CD8-positive, alpha-beta T cell (primary cell): ENCODE measurements at regions of chr5 and their contacts with region 1.

Region 1: GRCh38 chr5:170225326-170226128 is 7.3 kb upstream of the C5orf58 start:
- DNase-seq: peak; percentile 47 to 86 (median 79)
- ATAC-seq: peak; percentile 69
- H3K4me3 ChIP-seq: no peak overlapping the region
- H3K4me3 Mint-ChIP-seq: no peak overlapping the region
- H3K27ac ChIP-seq: no peak overlapping the region
- H3K27ac Mint-ChIP-seq: no peak overlapping the region
- H3K4me1 ChIP-seq: peaks cover 6% of the 10 kb centered on the region
- H3K4me1 Mint-ChIP-seq: peaks cover 4% of the 10 kb centered on the region
- H3K27me3 ChIP-seq: no peaks in the 10 kb centered on the region
- H3K27me3 Mint-ChIP-seq: no peaks in the 10 kb centered on the region
- CTCF ChIP-seq: peak; percentile 88

Region 2: DNA sequence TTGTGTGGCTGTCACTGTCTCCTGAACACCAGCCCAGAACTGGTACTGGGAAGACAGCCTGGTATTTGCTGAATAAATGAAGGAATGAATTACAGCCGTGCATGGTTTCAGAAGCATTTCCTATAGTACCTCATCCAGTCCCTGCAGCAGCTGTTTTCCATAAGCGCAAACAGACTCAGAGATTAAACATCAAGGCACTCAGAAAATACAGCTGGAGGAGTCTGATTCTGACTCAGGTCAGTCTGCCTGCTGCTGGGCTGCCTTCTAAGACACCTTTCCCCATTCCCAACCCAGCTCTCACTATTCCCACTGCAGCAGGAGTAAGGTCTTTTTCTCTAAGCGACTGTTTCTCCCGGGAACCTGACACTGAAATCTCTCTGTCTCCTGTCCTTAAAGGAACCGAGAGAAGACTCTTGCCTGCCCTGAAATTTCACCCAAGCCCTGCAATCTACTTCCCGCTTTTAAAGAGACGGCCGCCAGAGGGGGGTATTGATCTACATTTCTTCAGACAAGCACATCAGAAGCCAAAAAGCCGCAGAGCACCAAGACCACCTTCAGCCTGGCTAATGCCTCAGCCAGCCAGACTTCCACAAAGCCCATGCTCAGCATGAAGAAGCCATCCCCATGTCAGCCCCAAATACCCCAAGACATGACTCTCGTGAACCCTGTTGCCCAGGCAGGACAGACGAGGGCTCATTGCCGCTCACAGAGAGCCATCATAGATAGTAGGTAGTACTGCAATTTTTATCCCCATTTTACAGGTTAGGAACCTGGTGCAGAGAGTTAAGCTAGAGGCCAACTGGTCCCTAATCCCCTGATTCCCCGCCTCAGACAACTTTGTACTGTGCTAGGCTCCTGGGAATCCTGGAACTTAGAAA is 125.2 kb before region 1 on chr5:
- CTCF ChIA-PET with region 1: interaction called, 5 read pairs
- POLR2A ChIA-PET with region 1: no interaction called
- intact Hi-C with region 1: loop called (anchors 5 to 10 kb)
- DNase-seq: peak; percentile 50 to 80 (median 70)
- ATAC-seq: peak; percentile 56
- H3K4me3 ChIP-seq: no peak overlapping the region
- H3K4me3 Mint-ChIP-seq: no peak overlapping the region
- H3K27ac ChIP-seq: no peak overlapping the region
- H3K27ac Mint-ChIP-seq: no peak overlapping the region
- H3K4me1 ChIP-seq: no peaks in the 10 kb centered on the region
- H3K4me1 Mint-ChIP-seq: peaks cover 2% of the 10 kb centered on the region
- H3K27me3 ChIP-seq: peaks cover 0 to 5% of the 10 kb centered on the region in 2 experiments
- H3K27me3 Mint-ChIP-seq: peaks cover 22% of the 10 kb centered on the region
- CTCF ChIP-seq: peak; percentile 50

Region 3: DNA sequence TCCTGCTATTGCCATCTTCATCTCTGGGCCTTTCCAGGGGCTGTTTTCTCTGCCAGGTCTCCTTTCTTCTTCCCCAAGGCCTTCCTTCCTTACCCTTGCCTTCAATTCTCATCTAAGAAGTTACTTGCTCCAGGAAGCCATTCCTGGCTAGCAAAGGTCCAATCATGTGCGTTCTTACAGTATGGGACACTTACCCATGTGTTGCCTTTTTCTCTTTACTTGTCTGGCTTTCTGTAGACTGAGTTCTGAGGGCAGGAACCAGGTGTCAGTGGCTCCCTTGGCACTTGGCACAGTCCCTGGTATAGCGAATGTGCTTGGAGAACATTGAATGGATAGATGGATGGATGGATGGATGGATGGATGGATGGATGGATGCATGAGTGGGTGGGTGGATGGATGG is 109.6 kb before region 1 on chr5:
- CTCF ChIA-PET with region 1: no interaction called
- POLR2A ChIA-PET with region 1: no interaction called
- intact Hi-C with region 1: no loop called
- DNase-seq: no peak
- ATAC-seq: no peak
- H3K4me3 ChIP-seq: no peak overlapping the region
- H3K4me3 Mint-ChIP-seq: no peak overlapping the region
- H3K27ac ChIP-seq: no peak overlapping the region
- H3K27ac Mint-ChIP-seq: no peak overlapping the region
- H3K4me1 ChIP-seq: no peaks in the 10 kb centered on the region
- H3K4me1 Mint-ChIP-seq: no peaks in the 10 kb centered on the region
- H3K27me3 ChIP-seq: no peaks in the 10 kb centered on the region
- H3K27me3 Mint-ChIP-seq: peaks cover 11% of the 10 kb centered on the region
- CTCF ChIP-seq: no peak

Region 4: DNA sequence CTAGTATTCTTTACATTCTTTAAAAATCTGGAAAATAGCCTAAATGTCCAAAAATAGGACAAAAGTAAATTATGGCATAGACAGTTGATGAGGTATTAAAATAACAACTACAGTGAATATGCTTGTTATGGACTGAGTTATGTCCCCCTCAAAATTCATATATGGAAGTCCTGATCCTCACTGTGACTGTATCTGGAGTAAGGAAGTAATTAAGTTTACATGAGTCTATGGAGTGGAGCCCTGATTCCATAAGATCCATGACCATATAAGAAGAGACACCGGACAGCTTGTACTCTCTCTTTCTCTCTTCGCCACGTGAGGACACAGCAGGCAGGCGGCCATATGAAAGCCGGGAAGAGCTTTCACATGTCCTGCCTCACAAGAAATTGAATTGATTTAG is 21.3 kb before region 1 on chr5:
- CTCF ChIA-PET with region 1: no interaction called
- POLR2A ChIA-PET with region 1: no interaction called
- intact Hi-C with region 1: no loop called
- DNase-seq: no peak
- ATAC-seq: no peak
- H3K4me3 ChIP-seq: no peak overlapping the region
- H3K4me3 Mint-ChIP-seq: no peak overlapping the region
- H3K27ac ChIP-seq: no peak overlapping the region
- H3K27ac Mint-ChIP-seq: no peak overlapping the region
- H3K4me1 ChIP-seq: no peaks in the 10 kb centered on the region
- H3K4me1 Mint-ChIP-seq: no peaks in the 10 kb centered on the region
- H3K27me3 ChIP-seq: no peaks in the 10 kb centered on the region
- H3K27me3 Mint-ChIP-seq: peaks cover 23% of the 10 kb centered on the region
- CTCF ChIP-seq: no peak

Region 5: DNA sequence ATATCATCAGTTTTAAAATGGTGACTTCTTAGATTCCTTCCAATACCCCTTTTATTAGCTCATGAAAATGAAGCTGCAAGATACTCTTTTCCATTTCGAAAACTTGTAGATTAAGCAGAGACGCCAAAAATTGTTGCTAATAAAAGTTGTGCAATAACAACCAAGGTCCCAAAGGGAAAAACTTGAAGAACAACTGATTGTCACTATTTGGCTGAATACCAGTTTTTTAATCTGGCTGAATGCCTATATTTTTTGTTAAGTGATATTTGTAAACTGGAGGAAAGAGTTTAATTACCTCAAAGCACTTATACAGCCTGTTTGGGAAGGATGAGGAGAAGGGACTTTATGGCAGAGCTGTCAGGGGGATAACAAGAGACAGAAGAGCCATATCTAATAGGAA is 21.8 kb after region 1 on chr5:
- CTCF ChIA-PET with region 1: interaction called, 12 read pairs
- POLR2A ChIA-PET with region 1: no interaction called
- intact Hi-C with region 1: no loop called
- DNase-seq: no peak
- ATAC-seq: no peak
- H3K4me3 ChIP-seq: no peak overlapping the region
- H3K4me3 Mint-ChIP-seq: no peak overlapping the region
- H3K27ac ChIP-seq: no peak overlapping the region
- H3K27ac Mint-ChIP-seq: peak overlapping the region; percentile 41
- H3K4me1 ChIP-seq: peaks cover 8% of the 10 kb centered on the region
- H3K4me1 Mint-ChIP-seq: peaks cover 32% of the 10 kb centered on the region
- H3K27me3 ChIP-seq: no peaks in the 10 kb centered on the region
- H3K27me3 Mint-ChIP-seq: no peaks in the 10 kb centered on the region
- CTCF ChIP-seq: no peak

Region 6: GRCh38 chr5:170267431-170268152 is 42.1 kb after region 1 on chr5:
- CTCF ChIA-PET with region 1: interaction called, 69 read pairs
- POLR2A ChIA-PET with region 1: interaction called, 3 read pairs
- intact Hi-C with region 1: loop called (anchors 1 to 2 kb)
- DNase-seq: peak; percentile 65 to 93 (median 86)
- ATAC-seq: peak; percentile 52
- H3K4me3 ChIP-seq: peak overlapping the region in 1 of 2 experiments; percentile 9
- H3K4me3 Mint-ChIP-seq: peak overlapping the region; percentile 69
- H3K27ac ChIP-seq: peak overlapping the region; percentile 8 to 77
- H3K27ac Mint-ChIP-seq: peak overlapping the region; percentile 98
- H3K4me1 ChIP-seq: peaks cover 90% of the 10 kb centered on the region
- H3K4me1 Mint-ChIP-seq: peaks cover 96% of the 10 kb centered on the region
- H3K27me3 ChIP-seq: no peaks in the 10 kb centered on the region
- H3K27me3 Mint-ChIP-seq: no peaks in the 10 kb centered on the region
- CTCF ChIP-seq: peak; percentile 87

Region 7: GRCh38 chr5:170287532-170287931 is 62.0 kb after region 1 on chr5:
- CTCF ChIA-PET with region 1: interaction called, 41 read pairs
- POLR2A ChIA-PET with region 1: no interaction called
- intact Hi-C with region 1: no loop called
- DNase-seq: peak in 1 of 9 experiments; percentile 48
- ATAC-seq: peak; percentile 3
- H3K4me3 ChIP-seq: no peak overlapping the region
- H3K4me3 Mint-ChIP-seq: peak overlapping the region; percentile 68
- H3K27ac ChIP-seq: peak overlapping the region in 1 of 2 experiments; percentile 86
- H3K27ac Mint-ChIP-seq: peak overlapping the region; percentile 97
- H3K4me1 ChIP-seq: peaks cover 99% of the 10 kb centered on the region
- H3K4me1 Mint-ChIP-seq: peaks cover 100% of the 10 kb centered on the region
- H3K27me3 ChIP-seq: no peaks in the 10 kb centered on the region
- H3K27me3 Mint-ChIP-seq: no peaks in the 10 kb centered on the region
- CTCF ChIP-seq: no peak

Region 8: GRCh38 chr5:170333161-170333910 is 107.8 kb after region 1 on chr5:
- CTCF ChIA-PET with region 1: interaction called, 297 read pairs
- POLR2A ChIA-PET with region 1: interaction called, 9 read pairs
- intact Hi-C with region 1: no loop called
- DNase-seq: peak in 8 of 9 experiments; percentile 46 to 89 (median 72)
- ATAC-seq: peak; percentile 24
- H3K4me3 ChIP-seq: peak overlapping the region; percentile 17 to 27
- H3K4me3 Mint-ChIP-seq: peak overlapping the region; percentile 75
- H3K27ac ChIP-seq: peak overlapping the region; percentile 18 to 96
- H3K27ac Mint-ChIP-seq: no peak overlapping the region
- H3K4me1 ChIP-seq: peaks cover 95% of the 10 kb centered on the region
- H3K4me1 Mint-ChIP-seq: peaks cover 30% of the 10 kb centered on the region
- H3K27me3 ChIP-seq: no peaks in the 10 kb centered on the region
- H3K27me3 Mint-ChIP-seq: no peaks in the 10 kb centered on the region
- CTCF ChIP-seq: no peak

Region 9: DNA sequence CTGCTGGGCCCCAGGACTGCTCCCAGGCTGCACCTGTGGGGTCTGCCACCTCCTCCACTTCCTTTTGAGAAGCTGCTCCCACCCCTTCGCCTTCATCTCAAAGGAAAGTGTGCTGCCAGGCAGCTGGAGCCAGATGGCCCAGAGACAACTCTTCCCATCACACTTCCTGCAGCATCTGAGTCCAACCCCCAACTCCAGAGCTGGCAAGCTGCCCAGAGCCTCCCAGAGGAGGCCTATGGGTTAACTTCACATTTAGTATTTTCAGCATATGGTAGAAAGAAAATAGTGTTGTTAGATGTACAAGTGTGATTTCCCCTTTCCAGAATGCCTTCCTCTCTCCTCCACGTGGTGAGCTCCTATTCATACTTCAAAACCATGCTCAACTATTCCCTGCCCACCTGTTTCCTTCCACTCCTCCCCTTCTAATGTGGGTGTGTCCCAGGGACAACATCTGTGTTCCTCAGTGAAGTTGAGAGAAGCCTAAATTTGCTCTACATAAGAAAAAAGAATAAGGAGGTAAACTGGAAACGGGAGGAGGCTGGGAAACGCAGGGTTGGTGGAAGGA is 202.2 kb after region 1 on chr5:
- CTCF ChIA-PET with region 1: interaction called, 20 read pairs
- POLR2A ChIA-PET with region 1: no interaction called
- intact Hi-C with region 1: no loop called
- DNase-seq: no peak
- ATAC-seq: no peak
- H3K4me3 ChIP-seq: no peak overlapping the region
- H3K4me3 Mint-ChIP-seq: no peak overlapping the region
- H3K27ac ChIP-seq: no peak overlapping the region
- H3K27ac Mint-ChIP-seq: no peak overlapping the region
- H3K4me1 ChIP-seq: no peaks in the 10 kb centered on the region
- H3K4me1 Mint-ChIP-seq: no peaks in the 10 kb centered on the region
- H3K27me3 ChIP-seq: no peaks in the 10 kb centered on the region
- H3K27me3 Mint-ChIP-seq: peaks cover 4% of the 10 kb centered on the region
- CTCF ChIP-seq: no peak